ENCODE measurements at regions of chr7 and their contacts with region 1.

Region 1: DNA sequence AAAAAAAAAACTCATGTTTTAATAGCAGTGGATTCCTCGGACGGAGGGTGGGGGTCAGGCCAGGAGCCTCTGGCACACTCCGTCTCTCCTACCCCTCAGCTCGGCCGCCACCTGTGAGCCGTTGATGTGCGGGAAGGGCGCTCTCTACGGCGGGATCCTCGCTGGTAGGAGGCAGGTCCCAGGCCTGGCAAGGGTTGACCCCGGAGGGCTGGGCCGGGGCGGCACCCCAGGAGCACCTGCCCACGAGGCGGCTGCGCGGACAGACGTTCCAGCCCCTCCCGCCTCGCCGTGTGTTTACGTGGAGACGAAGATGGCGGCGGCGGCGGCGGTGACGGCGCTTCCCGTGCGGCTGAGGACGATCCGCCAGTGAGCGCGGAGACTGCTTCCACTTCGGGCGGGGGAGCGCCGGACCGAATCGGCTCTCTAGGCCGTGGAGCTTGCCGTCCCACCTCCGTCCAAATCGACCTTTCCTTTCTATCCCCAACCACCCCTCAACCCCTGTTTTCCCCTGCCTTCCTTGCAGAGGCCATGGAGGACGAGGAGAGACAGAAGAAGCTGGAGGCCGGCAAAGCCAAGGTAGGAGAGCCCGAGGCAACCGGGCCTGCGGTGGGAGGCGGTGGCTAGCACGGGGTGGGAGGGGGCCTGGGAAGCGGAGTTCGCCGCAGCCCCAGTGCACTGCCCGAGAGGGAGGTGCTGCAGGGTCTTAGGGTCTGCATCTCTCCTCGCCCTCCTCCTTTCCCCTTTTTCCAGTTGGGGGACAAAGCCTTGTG is at the start of gene AKAP9:
- DNase-seq: peak; percentile 93
- H3K4me3 ChIP-seq: peak within 1 kb of the TSS; percentile 80
- H3K27ac ChIP-seq: peak within 1 kb of the TSS; percentile 92
- H3K4me1 ChIP-seq: peaks cover 14% of the 10 kb centered on the region
- H3K27me3 ChIP-seq: no peaks in the 10 kb centered on the region
- CTCF ChIP-seq: no peak
- total RNA-seq, gene AKAP9: 97.7 to 140 TPM

Region 2: GRCh38 chr7:91098566-91098965 is 842.2 kb before region 1 on chr7:
- intact Hi-C with region 1: no loop called
- DNase-seq: no peak
- H3K4me3 ChIP-seq: no peak overlapping the region
- H3K27ac ChIP-seq: no peak overlapping the region
- H3K4me1 ChIP-seq: no peaks in the 10 kb centered on the region
- H3K27me3 ChIP-seq: no peaks in the 10 kb centered on the region
- CTCF ChIP-seq: no peak

Region 3: GRCh38 chr7:91880413-91881241 is 60.1 kb before region 1 on chr7 and contains the start of gene MTERF1:
- intact Hi-C with region 1: loop called (anchors 5 kb)
- DNase-seq: peak; percentile 94
- H3K4me3 ChIP-seq: peak within 1 kb of the TSS; percentile 74
- H3K27ac ChIP-seq: peak within 1 kb of the TSS; percentile 28
- H3K4me1 ChIP-seq: no peaks in the 10 kb centered on the region
- H3K27me3 ChIP-seq: no peaks in the 10 kb centered on the region
- CTCF ChIP-seq: peak; percentile 93
- total RNA-seq, gene MTERF1: 14.8 to 16.8 TPM

Region 4: DNA sequence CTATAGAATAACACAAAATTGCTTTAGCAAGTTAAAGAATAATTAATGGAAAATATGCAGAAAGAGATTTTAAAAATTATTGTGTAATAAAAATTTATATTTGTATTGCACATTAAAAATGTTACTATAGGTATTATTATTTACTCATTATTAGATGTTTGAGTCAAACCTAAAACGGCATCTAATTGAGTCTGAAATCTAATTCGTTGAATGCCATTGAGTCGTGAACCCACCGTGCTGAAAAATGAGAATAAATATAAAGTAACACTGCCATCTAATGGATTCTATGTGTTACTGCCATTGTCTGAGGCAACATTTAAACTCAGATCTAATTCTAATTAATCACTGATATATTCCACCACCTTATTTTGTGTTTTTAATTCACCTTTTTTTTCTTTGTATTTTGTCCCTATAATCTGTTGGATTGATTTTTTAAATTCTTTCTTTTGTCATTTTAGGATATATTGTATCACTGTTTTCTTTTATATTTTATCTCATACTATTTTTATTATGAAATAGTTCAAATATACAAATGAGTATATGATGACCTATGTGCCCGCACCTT is 1114.9 kb after region 1 on chr7:
- intact Hi-C with region 1: no loop called
- DNase-seq: no peak
- H3K4me3 ChIP-seq: no peak overlapping the region
- H3K27ac ChIP-seq: no peak overlapping the region
- H3K4me1 ChIP-seq: no peaks in the 10 kb centered on the region
- H3K27me3 ChIP-seq: no peaks in the 10 kb centered on the region
- CTCF ChIP-seq: peak; percentile 86